ENCODE measurements at regions of chr11 and their contacts with region 1.

Region 1: GRCh38 chr11:71977743-71978418 is 20.8 kb upstream of the IL18BP start:
- DNase-seq: peak; percentile 49
- H3K4me3 ChIP-seq: no peak overlapping the region
- H3K27ac ChIP-seq: no peak overlapping the region; a peak in 1 of 4 replicates
- H3K4me1 ChIP-seq: no peaks in the 10 kb centered on the region; a peak in 2 of 4 replicates
- H3K27me3 ChIP-seq: no peaks in the 10 kb centered on the region
- CTCF ChIP-seq: peak; percentile 86
- EP300 ChIP-seq: no peak
- RAD21 ChIP-seq: peak; percentile 88

Region 2: DNA sequence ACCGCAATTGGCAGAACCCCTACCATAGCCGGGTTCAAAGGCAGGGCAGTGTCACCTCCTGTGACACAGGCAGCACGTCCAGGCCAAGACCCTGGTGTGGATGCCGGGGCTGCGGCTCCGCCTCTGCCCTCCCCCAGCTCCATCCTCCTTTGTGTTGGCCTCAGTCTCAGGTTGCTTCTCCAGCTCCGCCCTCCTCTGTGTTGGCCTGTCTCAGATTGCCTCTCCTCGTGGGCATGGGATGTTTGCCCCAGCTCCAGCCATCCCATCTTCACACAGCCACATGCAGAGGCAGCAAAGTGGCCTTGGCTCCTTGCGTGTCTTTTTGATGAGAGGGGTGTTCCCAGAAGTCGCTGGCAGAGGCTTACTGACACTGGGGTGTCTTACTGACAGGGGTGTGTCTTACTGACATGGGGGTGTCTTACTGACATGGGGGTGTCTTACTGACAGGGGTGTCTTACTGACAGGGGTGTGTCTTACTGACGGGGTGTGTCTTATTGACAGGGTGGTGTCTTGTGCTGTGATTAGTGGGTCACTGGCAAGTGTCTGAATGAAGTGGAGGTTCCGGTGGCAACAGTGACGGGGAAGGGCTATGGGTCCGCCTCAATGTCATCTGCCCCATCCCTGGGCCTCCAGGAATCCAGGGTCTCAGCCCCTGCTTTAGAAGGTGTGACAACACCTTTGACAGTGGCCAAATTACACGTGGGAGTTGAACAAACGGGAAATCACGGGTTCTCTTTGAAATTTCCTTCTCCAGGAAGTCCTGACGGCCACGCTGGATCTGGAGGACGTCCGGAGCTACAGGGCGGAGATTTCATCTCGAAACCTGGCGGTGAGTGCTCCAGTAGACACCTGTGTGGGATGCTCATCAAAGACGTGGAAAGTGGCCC is 500.0 kb before region 1 on chr11:
- CTCF ChIA-PET with region 1: no interaction called
- POLR2A ChIA-PET with region 1: no interaction called
- DNase-seq: no peak
- H3K4me3 ChIP-seq: no peak overlapping the region
- H3K27ac ChIP-seq: no peak overlapping the region
- H3K4me1 ChIP-seq: no peaks in the 10 kb centered on the region
- H3K27me3 ChIP-seq: no peaks in the 10 kb centered on the region
- CTCF ChIP-seq: no peak
- EP300 ChIP-seq: no peak
- RAD21 ChIP-seq: no peak

Region 3: GRCh38 chr11:71895961-71896360 is 81.9 kb before region 1 on chr11:
- CTCF ChIA-PET with region 1: no interaction called
- POLR2A ChIA-PET with region 1: no interaction called
- DNase-seq: no peak
- H3K4me3 ChIP-seq: no peak overlapping the region
- H3K27ac ChIP-seq: no peak overlapping the region
- H3K4me1 ChIP-seq: no peaks in the 10 kb centered on the region
- H3K27me3 ChIP-seq: no peaks in the 10 kb centered on the region
- CTCF ChIP-seq: no peak
- EP300 ChIP-seq: no peak
- RAD21 ChIP-seq: no peak

Region 4: GRCh38 chr11:71936825-71937224 is 41.1 kb before region 1 on chr11:
- CTCF ChIA-PET with region 1: no interaction called
- POLR2A ChIA-PET with region 1: no interaction called
- DNase-seq: peak; percentile 15
- H3K4me3 ChIP-seq: no peak overlapping the region
- H3K27ac ChIP-seq: peak overlapping the region; percentile 17 to 47; a peak in 3 of 4 replicates
- H3K4me1 ChIP-seq: peaks cover 5 to 9% of the 10 kb centered on the region in 2 experiments; a peak in 3 of 4 replicates
- H3K27me3 ChIP-seq: no peaks in the 10 kb centered on the region
- CTCF ChIP-seq: no peak
- EP300 ChIP-seq: no peak
- RAD21 ChIP-seq: no peak

Region 5: GRCh38 chr11:71948314-71949027 is 29.4 kb before region 1 on chr11:
- CTCF ChIA-PET with region 1: interaction called, 12 read pairs
- POLR2A ChIA-PET with region 1: no interaction called
- DNase-seq: no peak
- H3K4me3 ChIP-seq: no peak overlapping the region
- H3K27ac ChIP-seq: no peak overlapping the region
- H3K4me1 ChIP-seq: peaks cover 0 to 27% of the 10 kb centered on the region in 2 experiments; a peak in 3 of 4 replicates
- H3K27me3 ChIP-seq: no peaks in the 10 kb centered on the region
- CTCF ChIP-seq: no peak
- EP300 ChIP-seq: no peak
- RAD21 ChIP-seq: no peak

Region 6: DNA sequence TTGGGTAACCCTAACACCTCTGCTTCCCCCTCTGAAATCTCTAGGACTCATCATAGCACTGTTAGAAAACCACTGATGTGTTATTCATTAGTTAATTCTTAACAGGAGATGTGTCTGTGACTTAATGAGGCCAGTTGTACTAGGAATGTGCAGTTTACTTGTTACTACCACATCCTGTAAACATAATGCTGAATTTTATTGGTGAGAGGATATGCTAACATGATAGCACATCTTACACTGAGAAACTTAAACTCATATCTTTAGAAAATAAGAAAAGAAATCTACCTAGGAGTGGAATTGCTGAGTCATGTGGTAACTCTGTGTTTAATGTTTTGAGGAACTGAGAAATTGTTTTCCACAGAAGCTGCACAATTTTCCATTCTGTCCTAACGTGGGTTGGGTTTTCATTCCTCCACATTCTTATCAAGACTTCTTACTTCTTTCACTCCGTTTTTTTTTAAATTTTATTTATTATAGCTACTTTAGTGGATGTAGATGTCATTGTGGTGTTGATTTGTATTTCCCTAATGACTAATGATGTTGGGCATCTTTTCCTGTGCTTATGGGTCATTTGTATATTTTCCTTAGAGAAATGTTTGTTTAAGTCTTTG is 15.3 kb before region 1 on chr11:
- CTCF ChIA-PET with region 1: interaction called, 24 read pairs
- POLR2A ChIA-PET with region 1: no interaction called
- DNase-seq: no peak
- H3K4me3 ChIP-seq: no peak overlapping the region
- H3K27ac ChIP-seq: no peak overlapping the region; a peak in 1 of 4 replicates
- H3K4me1 ChIP-seq: no peaks in the 10 kb centered on the region
- H3K27me3 ChIP-seq: no peaks in the 10 kb centered on the region
- CTCF ChIP-seq: no peak
- EP300 ChIP-seq: no peak
- RAD21 ChIP-seq: no peak

Region 7: GRCh38 chr11:71998662-71999310 is 20.9 kb after region 1 on chr11 and contains the start of gene IL18BP:
- CTCF ChIA-PET with region 1: interaction called, 26 read pairs
- POLR2A ChIA-PET with region 1: no interaction called
- DNase-seq: no peak
- H3K4me3 ChIP-seq: no peak within 1 kb of the TSS
- H3K27ac ChIP-seq: peak within 1 kb of the TSS in 1 of 2 experiments; percentile 12; a peak in 1 of 4 replicates
- H3K4me1 ChIP-seq: peaks cover 0 to 10% of the 10 kb centered on the region in 2 experiments; a peak in 1 of 4 replicates
- H3K27me3 ChIP-seq: no peaks in the 10 kb centered on the region
- CTCF ChIP-seq: no peak
- EP300 ChIP-seq: no peak
- RAD21 ChIP-seq: no peak
- polyA plus RNA-seq, gene IL18BP: 5.0 and 6.8 TPM in 2 replicates

Region 8: GRCh38 chr11:72015511-72016171 is 37.8 kb after region 1 on chr11:
- CTCF ChIA-PET with region 1: interaction called, 37 read pairs
- POLR2A ChIA-PET with region 1: no interaction called
- DNase-seq: no peak
- H3K4me3 ChIP-seq: no peak overlapping the region
- H3K27ac ChIP-seq: no peak overlapping the region; a peak in 1 of 4 replicates
- H3K4me1 ChIP-seq: no peaks in the 10 kb centered on the region; a peak in 1 of 4 replicates
- H3K27me3 ChIP-seq: no peaks in the 10 kb centered on the region
- CTCF ChIP-seq: peak; percentile 39; the same call in 1 of the 2 replicates
- EP300 ChIP-seq: no peak
- RAD21 ChIP-seq: peak; percentile 19; the same call in 1 of the 2 replicates

Region 9: GRCh38 chr11:72085621-72086351 is 107.9 kb after region 1 on chr11:
- CTCF ChIA-PET with region 1: interaction called, 36 read pairs
- POLR2A ChIA-PET with region 1: no interaction called
- DNase-seq: no peak
- H3K4me3 ChIP-seq: no peak overlapping the region
- H3K27ac ChIP-seq: peak overlapping the region in 1 of 2 experiments; percentile 44; a peak in 2 of 4 replicates
- H3K4me1 ChIP-seq: peaks cover 0 to 39% of the 10 kb centered on the region in 2 experiments; a peak in 3 of 4 replicates
- H3K27me3 ChIP-seq: no peaks in the 10 kb centered on the region
- CTCF ChIP-seq: no peak
- EP300 ChIP-seq: no peak
- RAD21 ChIP-seq: no peak

Region 10: GRCh38 chr11:72141066-72141465 is 163.2 kb after region 1 on chr11:
- CTCF ChIA-PET with region 1: interaction called, 17 read pairs
- POLR2A ChIA-PET with region 1: no interaction called
- DNase-seq: no peak
- H3K4me3 ChIP-seq: no peak overlapping the region
- H3K27ac ChIP-seq: peak overlapping the region in 1 of 2 experiments; percentile 37; a peak in 1 of 4 replicates
- H3K4me1 ChIP-seq: no peaks in the 10 kb centered on the region; a peak in 1 of 4 replicates
- H3K27me3 ChIP-seq: no peaks in the 10 kb centered on the region
- CTCF ChIP-seq: no peak
- EP300 ChIP-seq: no peak
- RAD21 ChIP-seq: no peak

Region 11: DNA sequence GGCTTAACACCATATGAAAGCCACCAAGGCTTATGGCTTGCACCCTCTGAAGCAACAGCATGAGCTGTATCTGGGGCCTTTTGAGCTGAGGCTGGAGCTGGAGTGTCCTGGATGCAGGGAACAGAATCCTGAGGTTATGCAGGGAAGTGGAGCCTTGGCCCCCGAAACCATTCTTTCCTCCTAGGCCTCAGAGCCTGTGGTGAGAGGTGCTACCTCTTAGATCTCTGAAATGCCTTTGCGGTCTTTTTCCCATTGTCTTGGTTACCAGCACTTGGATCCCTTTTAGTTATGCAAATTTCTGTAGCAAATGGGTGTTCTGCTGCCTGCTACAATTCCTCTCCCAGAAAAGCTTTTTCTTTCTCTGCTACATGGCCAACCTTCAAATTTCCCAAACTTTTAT is 529.2 kb after region 1 on chr11:
- CTCF ChIA-PET with region 1: no interaction called
- POLR2A ChIA-PET with region 1: no interaction called
- DNase-seq: no peak
- H3K4me3 ChIP-seq: no peak overlapping the region
- H3K27ac ChIP-seq: no peak overlapping the region
- H3K4me1 ChIP-seq: no peaks in the 10 kb centered on the region
- H3K27me3 ChIP-seq: no peaks in the 10 kb centered on the region
- CTCF ChIP-seq: no peak
- EP300 ChIP-seq: no peak
- RAD21 ChIP-seq: no peak